A549 (cell line): ENCODE measurements at regions of chr20 and their contacts with region 1.

Region 1: DNA sequence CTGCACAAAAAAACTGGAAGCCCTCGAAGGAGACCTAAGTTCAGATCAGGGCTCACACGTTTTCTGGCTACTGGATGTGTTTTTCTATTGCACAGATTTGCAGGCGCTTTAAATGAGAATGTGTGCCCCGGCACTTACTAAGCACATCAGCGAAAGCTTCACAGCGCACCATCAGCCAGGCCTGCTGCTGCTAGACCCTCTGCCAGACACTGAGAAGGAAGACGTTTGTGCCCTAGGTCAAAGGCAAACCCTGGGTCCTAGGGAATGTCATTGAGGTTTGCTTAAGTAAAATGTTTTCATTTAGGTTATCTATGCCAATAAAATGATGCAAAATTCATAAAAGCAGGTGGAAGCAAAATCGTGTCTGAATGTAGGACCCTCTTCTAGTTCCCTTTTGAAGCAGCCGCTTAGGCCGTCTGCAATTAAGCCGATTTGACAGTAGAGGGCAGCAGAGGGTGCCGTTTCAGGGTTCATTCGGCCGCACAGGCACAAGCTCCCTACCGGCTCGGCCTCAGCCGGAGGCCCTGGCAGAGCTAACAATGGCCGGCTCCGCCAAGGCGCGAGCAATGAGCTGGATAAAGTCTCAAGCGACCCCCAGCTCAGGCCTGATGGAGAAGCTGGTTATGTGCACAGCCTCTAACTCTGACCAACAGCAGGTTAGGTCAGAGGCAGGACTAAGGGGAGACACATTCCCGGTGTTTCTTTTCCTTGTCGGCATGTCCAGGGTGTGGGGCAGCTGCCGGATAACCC is 107.2 kb upstream of the FOXA2 start:
- DNase-seq: peak; percentile 85 to 89
- ATAC-seq: peak; percentile 93 to 97
- H3K4me3 ChIP-seq: no peak overlapping the region; the same call in 2 of the 3 replicates
- H3K27ac ChIP-seq: peak overlapping the region; percentile 83 to 90
- H3K4me1 ChIP-seq: peaks cover 23% of the 10 kb centered on the region
- CTCF ChIP-seq: peak; percentile 97
- EP300 ChIP-seq: no peak
- POLR2A ChIP-seq: no peak
- RAD21 ChIP-seq: peak; percentile 99 to 100

Region 2: GRCh38 chr20:22586645-22587310 is 104.8 kb before region 1 on chr20:
- CTCF ChIA-PET with region 1: interaction called, 224 read pairs
- POLR2A ChIA-PET with region 1: no interaction called
- DNase-seq: peak; percentile 71 to 83
- ATAC-seq: peak; percentile 35 to 63
- H3K4me3 ChIP-seq: peak overlapping the region; percentile 54
- H3K27ac ChIP-seq: peak overlapping the region; percentile 94 to 96
- H3K4me1 ChIP-seq: peaks cover 24% of the 10 kb centered on the region
- CTCF ChIP-seq: peak; percentile 98
- EP300 ChIP-seq: no peak
- POLR2A ChIP-seq: no peak
- RAD21 ChIP-seq: peak; percentile 94 to 100

Region 3: DNA sequence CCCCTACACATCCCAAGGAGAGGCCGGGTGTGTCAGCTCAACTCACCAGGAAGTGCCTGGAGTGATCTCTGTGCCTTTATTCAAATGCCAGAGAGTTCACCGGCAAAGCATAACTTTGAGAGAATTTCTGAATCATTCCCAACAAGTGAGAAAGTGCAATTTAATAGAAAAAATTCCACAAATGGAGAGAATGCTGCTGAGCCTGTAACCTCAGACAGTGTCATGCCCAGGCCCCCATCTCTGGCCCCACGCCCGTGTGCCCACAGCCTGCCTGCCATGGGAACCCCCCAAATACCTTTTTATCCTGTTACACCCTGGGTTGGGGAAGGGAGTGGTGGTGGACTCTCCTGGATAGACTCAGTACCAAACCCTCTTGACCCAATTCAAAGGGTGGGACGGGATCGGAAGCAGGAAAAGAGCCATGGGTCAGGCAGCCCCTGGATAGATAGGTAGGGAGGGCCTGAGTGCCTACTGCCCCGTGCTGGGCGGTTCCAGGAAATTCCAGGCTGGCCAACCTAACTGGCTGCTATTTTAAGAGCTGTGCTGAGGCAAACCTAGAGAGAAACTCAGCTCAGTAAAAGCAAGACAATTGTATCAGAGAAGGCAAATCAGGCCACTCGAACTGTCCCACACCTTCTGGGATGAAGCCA is 71.8 kb after region 1 on chr20:
- CTCF ChIA-PET with region 1: interaction called, 51 read pairs
- POLR2A ChIA-PET with region 1: interaction called, 3 read pairs
- DNase-seq: peak; percentile 55 to 84
- ATAC-seq: peak; percentile 88
- H3K4me3 ChIP-seq: peak overlapping the region; percentile 4; the same call in 2 of the 3 replicates
- H3K27ac ChIP-seq: peak overlapping the region; percentile 92 to 98
- H3K4me1 ChIP-seq: peaks cover 41% of the 10 kb centered on the region
- CTCF ChIP-seq: no peak
- EP300 ChIP-seq: peak in 1 of 2 experiments; percentile 66; a peak in 1 of 5 replicates
- POLR2A ChIP-seq: no peak
- RAD21 ChIP-seq: peak in 1 of 2 experiments; percentile 7; a peak in 2 of 5 replicates

Region 4: GRCh38 chr20:22825076-22825475 is 133.5 kb after region 1 on chr20:
- CTCF ChIA-PET with region 1: interaction called, 21 read pairs
- POLR2A ChIA-PET with region 1: no interaction called
- DNase-seq: no peak
- ATAC-seq: no peak
- H3K4me3 ChIP-seq: no peak overlapping the region
- H3K27ac ChIP-seq: peak overlapping the region in 1 of 2 experiments; percentile 44; a peak in 3 of 6 replicates
- H3K4me1 ChIP-seq: 0 out of 3 replicates have a peak, but pooled peaks cover 4% of the 10 kb centered on the region
- CTCF ChIP-seq: no peak
- EP300 ChIP-seq: no peak
- POLR2A ChIP-seq: no peak
- RAD21 ChIP-seq: no peak

Region 5: DNA sequence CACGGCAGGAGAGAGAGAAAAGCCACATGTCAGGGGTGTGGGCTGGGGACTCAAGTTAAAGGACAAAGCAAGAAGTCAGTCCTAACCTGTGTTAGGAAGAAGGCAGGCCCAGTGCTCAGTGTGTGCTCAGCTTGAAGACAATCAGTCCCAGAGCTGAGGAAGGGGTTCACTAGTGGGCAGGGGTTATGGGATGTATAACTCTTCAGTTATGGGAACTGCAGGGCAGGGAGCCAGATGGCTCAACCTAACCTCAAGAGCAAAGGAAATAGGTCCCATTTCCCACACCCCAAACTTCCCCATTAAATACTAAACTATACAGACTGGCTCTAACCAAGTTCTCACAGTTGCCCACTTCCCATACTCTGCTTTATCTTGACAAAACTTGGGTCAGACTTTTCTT is 336.2 kb after region 1 on chr20:
- CTCF ChIA-PET with region 1: interaction called, 10 read pairs
- POLR2A ChIA-PET with region 1: no interaction called
- DNase-seq: no peak
- ATAC-seq: no peak
- H3K4me3 ChIP-seq: no peak overlapping the region
- H3K27ac ChIP-seq: no peak overlapping the region; a peak in 1 of 6 replicates
- H3K4me1 ChIP-seq: peaks cover 11% of the 10 kb centered on the region; the same call in 1 of the 3 replicates
- CTCF ChIP-seq: no peak
- EP300 ChIP-seq: no peak
- POLR2A ChIP-seq: no peak
- RAD21 ChIP-seq: no peak

Region 6: GRCh38 chr20:23200918-23201317 is 509.4 kb after region 1 on chr20:
- CTCF ChIA-PET with region 1: interaction called, 77 read pairs
- POLR2A ChIA-PET with region 1: no interaction called
- DNase-seq: peak; percentile 43 to 66
- ATAC-seq: peak; percentile 84 to 93; a peak in 5 of 6 replicates
- H3K4me3 ChIP-seq: no peak overlapping the region
- H3K27ac ChIP-seq: 0 out of 6 replicates have a peak overlapping the region, but pooled peaks of 1 of the 2 experiments have one; percentile 8
- H3K4me1 ChIP-seq: no peaks in the 10 kb centered on the region
- CTCF ChIP-seq: peak; percentile 54
- EP300 ChIP-seq: no peak
- POLR2A ChIP-seq: no peak
- RAD21 ChIP-seq: peak; percentile 74 to 76

Region 7: GRCh38 chr20:23350196-23350903 is 658.8 kb after region 1 on chr20 and contains the start of gene NXT1:
- CTCF ChIA-PET with region 1: interaction called, 378 read pairs
- POLR2A ChIA-PET with region 1: interaction called, 6 read pairs
- DNase-seq: peak; percentile 95 to 99
- ATAC-seq: peak; percentile 86 to 93
- H3K4me3 ChIP-seq: peak within 1 kb of the TSS; percentile 81
- H3K27ac ChIP-seq: peak within 1 kb of the TSS; percentile 94 to 95
- H3K4me1 ChIP-seq: peaks cover 21% of the 10 kb centered on the region
- CTCF ChIP-seq: no peak
- EP300 ChIP-seq: no peak; a peak in 1 of 5 replicates
- POLR2A ChIP-seq: peak; percentile 79
- RAD21 ChIP-seq: no peak
- polyA plus RNA-seq, gene NXT1: 68.2 and 71.8 TPM in 2 replicates